ENCODE measurements at regions of chr15 and their contacts with region 1.

Region 1: DNA sequence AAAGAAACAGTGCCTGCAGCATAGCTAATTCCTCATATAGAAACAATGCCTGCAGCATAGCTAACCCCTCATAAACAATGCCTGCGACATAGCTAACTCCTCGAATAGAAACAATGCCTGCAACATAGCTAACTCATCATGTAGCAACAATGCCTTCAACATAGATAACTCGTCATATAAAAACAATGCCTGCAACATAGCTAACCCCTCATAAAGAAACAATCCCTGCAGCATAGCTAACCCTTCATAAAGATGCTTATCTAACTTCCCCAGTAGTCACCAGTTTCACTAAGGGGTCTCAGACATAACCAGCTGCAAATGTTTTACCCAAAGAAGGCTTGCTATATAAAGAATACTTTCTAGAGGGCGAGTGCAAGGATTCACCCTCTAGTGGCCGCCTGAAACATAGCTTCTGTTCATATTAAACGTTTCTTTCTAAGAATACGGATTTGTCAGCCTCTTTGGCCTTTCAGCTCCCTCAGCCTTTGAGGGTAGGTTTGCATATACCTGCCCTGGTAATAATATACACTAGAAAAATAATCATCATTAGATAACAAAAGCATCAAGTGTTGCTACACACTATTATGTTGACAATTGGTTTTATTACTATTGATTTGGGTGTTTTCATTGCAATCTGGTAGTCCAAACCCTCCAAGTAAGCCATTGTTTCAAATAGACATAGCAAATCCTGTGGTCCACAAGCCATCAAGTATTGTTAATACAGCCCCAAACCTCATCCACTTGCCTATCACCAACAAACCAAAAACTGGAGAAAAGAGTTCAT is 44.4 kb upstream of the FAN1 start:
- DNase-seq: peak; percentile 38
- ATAC-seq: no peak
- H3K4me3 ChIP-seq: no peak overlapping the region
- H3K4me3 Mint-ChIP-seq: no peak overlapping the region
- H3K27ac ChIP-seq: no peak overlapping the region
- H3K27ac Mint-ChIP-seq: no peak overlapping the region
- H3K4me1 ChIP-seq: no peaks in the 10 kb centered on the region
- H3K4me1 Mint-ChIP-seq: peaks cover 4% of the 10 kb centered on the region
- H3K27me3 ChIP-seq: no peaks in the 10 kb centered on the region
- H3K27me3 Mint-ChIP-seq: no peaks in the 10 kb centered on the region
- CTCF ChIP-seq: peak; percentile 86

Region 2: DNA sequence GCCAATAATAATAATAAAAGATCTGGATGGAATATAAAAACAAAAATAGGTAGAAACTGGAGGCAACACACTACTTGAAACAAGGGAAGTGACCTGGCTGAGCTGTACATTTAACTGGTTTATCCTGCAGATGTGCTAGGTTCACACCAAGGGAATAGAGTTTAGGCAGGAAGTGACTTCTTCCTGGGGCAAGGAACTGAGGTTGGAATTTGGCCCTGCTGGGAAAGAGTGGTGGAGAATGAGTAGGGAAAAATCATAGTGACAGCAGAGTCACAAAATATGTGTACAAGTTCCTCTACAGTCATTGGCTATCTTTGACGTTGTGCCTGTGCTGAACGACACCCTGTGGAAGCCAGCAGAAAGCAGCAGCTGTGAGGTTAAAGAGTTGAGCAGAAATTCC is 189.2 kb before region 1 on chr15:
- CTCF ChIA-PET with region 1: interaction called, 4 read pairs
- POLR2A ChIA-PET with region 1: no interaction called
- intact Hi-C with region 1: loop called (anchors 10 kb)
- DNase-seq: no peak
- ATAC-seq: no peak
- H3K4me3 ChIP-seq: no peak overlapping the region
- H3K4me3 Mint-ChIP-seq: no peak overlapping the region
- H3K27ac ChIP-seq: no peak overlapping the region
- H3K27ac Mint-ChIP-seq: no peak overlapping the region
- H3K4me1 ChIP-seq: no peaks in the 10 kb centered on the region
- H3K4me1 Mint-ChIP-seq: no peaks in the 10 kb centered on the region
- H3K27me3 ChIP-seq: no peaks in the 10 kb centered on the region
- H3K27me3 Mint-ChIP-seq: no peaks in the 10 kb centered on the region
- CTCF ChIP-seq: no peak